ENCODE measurements at regions of chr11 and their contacts with region 1.

Region 1: DNA sequence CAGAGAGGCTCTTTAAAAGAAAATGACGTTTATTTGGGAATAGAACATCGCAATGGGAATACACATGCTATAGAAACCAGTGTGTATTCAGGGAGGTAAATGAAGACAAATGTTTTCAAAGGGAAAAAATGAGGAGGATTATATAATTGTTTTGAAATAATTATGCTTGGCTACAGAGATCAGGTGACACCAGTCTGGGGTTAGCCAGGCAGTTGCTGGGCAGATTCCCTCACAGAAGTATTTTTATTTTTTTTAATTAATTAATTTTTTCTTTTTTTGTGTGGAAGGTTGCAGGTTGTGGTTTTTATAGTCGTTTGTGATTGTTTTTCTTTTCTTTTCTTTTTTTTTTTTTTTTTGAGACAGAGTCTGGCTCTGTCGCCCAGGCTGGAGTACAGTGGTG is 5.6 kb upstream of the STARD10 start:
- DNase-seq: no peak
- H3K4me3 ChIP-seq: no peak overlapping the region
- H3K27ac ChIP-seq: no peak overlapping the region
- H3K4me1 ChIP-seq: peaks cover 9% of the 10 kb centered on the region
- H3K27me3 ChIP-seq: no peaks in the 10 kb centered on the region
- CTCF ChIP-seq: no peak

Region 2: DNA sequence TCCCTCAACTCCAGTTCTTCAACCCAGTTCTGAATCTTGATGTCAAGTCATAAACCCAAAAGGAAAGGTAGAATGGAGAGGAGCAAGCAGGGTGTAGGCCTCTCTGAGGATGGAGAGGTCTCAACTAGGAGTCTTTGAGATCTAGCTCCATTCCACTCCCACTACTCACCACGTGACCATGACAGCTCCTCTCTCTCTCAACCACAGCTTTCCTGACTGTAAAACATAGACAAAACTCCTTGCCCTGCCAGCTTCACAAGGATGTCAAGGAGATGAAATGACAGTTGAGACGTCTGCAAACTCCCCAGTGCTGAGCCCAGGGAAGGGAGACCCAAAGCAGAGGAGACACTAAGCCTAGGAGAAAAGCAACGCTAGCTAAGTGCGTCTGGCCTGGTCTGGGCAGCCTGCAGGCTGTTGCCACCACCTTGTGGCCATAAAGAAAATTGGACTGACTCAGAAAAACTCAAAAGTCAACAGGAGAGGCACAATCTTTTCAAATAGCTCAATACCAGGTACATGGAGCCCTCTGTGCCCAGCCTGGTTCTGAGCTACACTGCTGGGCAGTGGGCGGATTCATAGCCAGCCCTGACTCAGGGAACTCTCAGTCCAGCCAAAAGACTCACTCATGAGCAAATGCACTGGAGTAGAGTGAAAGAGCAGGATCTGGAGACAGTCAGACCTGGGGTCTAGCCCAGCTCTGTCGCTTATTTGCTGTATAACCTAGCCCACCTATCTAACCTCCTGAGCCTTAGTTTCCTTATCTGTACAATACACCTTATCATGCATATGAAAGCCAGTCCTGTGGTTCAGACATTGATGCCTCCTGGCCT is 368.5 kb before region 1 on chr11:
- CTCF ChIA-PET with region 1: no interaction called
- POLR2A ChIA-PET with region 1: no interaction called
- intact Hi-C with region 1: no loop called
- DNase-seq: peak in 1 of 2 experiments; percentile 37
- H3K4me3 ChIP-seq: no peak overlapping the region
- H3K27ac ChIP-seq: no peak overlapping the region
- H3K4me1 ChIP-seq: peaks cover 10% of the 10 kb centered on the region
- H3K27me3 ChIP-seq: no peaks in the 10 kb centered on the region
- CTCF ChIP-seq: peak; percentile 82

Region 3: GRCh38 chr11:72471005-72471898 is 328.2 kb before region 1 on chr11:
- CTCF ChIA-PET with region 1: no interaction called
- POLR2A ChIA-PET with region 1: interaction called, 10 read pairs
- intact Hi-C with region 1: no loop called
- DNase-seq: peak; percentile 52 to 64
- H3K4me3 ChIP-seq: no peak overlapping the region
- H3K27ac ChIP-seq: no peak overlapping the region
- H3K4me1 ChIP-seq: no peaks in the 10 kb centered on the region
- H3K27me3 ChIP-seq: peaks cover 14% of the 10 kb centered on the region; the same call in 1 of the 2 replicates
- CTCF ChIP-seq: peak; percentile 96

Region 4: GRCh38 chr11:72709478-72710238 is 89.8 kb before region 1 on chr11:
- CTCF ChIA-PET with region 1: interaction called, 11 read pairs
- POLR2A ChIA-PET with region 1: no interaction called
- intact Hi-C with region 1: no loop called
- DNase-seq: no peak
- H3K4me3 ChIP-seq: no peak overlapping the region
- H3K27ac ChIP-seq: no peak overlapping the region
- H3K4me1 ChIP-seq: no peaks in the 10 kb centered on the region
- H3K27me3 ChIP-seq: no peaks in the 10 kb centered on the region
- CTCF ChIP-seq: no peak

Region 5: DNA sequence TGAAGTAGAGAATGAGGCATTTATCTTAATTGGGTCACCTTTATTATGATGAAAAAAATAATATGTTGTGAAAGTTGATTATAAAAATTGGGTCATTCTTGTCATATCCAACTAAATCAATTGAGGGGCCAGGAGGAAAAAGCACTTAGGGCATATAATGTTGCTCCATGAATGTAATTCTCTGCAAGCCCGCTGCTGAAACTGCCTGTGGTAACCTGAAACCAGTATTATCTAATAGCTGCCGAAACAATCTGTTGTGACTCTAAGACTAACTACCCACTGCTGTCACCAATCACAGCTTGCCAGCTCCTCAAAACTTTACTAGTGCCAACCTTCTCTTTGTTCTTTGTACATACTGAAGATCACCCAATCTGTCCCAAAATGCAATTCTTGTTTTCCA is 130.6 kb after region 1 on chr11:
- CTCF ChIA-PET with region 1: no interaction called
- POLR2A ChIA-PET with region 1: no interaction called
- intact Hi-C with region 1: no loop called
- DNase-seq: no peak
- H3K4me3 ChIP-seq: no peak overlapping the region
- H3K27ac ChIP-seq: no peak overlapping the region
- H3K4me1 ChIP-seq: no peaks in the 10 kb centered on the region
- H3K27me3 ChIP-seq: no peaks in the 10 kb centered on the region
- CTCF ChIP-seq: no peak

Measured in PC-9 (cell line).